CD8-positive, alpha-beta T cell (primary cell): ENCODE measurements at regions of chr1 and their contacts with region 1.

Region 1: DNA sequence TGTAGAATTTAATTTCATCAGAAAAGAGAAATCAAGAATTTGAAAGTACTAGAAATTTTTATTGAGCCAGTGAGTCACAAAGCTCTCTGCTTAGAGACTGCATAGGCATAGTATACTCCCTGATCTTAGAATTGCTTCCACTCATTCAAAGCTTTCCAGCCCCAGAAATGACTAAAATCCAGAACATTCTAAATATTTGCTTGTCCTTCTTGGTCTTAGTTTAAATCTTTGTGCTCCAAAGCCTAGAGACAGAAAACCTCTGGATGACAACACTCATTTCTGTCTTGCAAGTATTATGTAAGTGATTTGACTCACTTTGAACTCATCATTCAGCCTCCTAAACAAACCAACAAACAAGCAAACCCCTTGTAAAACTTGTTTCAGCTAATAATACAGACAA is 74.2 kb downstream of the PTPRC start:
- DNase-seq: no peak
- ATAC-seq: no peak
- H3K4me3 ChIP-seq: no peak overlapping the region
- H3K4me3 Mint-ChIP-seq: no peak overlapping the region
- H3K27ac ChIP-seq: peak overlapping the region in 1 of 2 experiments; percentile 38
- H3K27ac Mint-ChIP-seq: peak overlapping the region; percentile 38
- H3K4me1 ChIP-seq: peaks cover 9% of the 10 kb centered on the region
- H3K4me1 Mint-ChIP-seq: peaks cover 54% of the 10 kb centered on the region
- H3K27me3 ChIP-seq: no peaks in the 10 kb centered on the region
- H3K27me3 Mint-ChIP-seq: no peaks in the 10 kb centered on the region
- CTCF ChIP-seq: no peak

Region 2: GRCh38 chr1:198283222-198283621 is 429.9 kb before region 1 on chr1:
- CTCF ChIA-PET with region 1: no interaction called
- POLR2A ChIA-PET with region 1: no interaction called
- intact Hi-C with region 1: loop called (anchors 10 kb)
- DNase-seq: no peak
- ATAC-seq: no peak
- H3K4me3 ChIP-seq: no peak overlapping the region
- H3K4me3 Mint-ChIP-seq: no peak overlapping the region
- H3K27ac ChIP-seq: no peak overlapping the region
- H3K27ac Mint-ChIP-seq: no peak overlapping the region
- H3K4me1 ChIP-seq: no peaks in the 10 kb centered on the region
- H3K4me1 Mint-ChIP-seq: peaks cover 29% of the 10 kb centered on the region
- H3K27me3 ChIP-seq: no peaks in the 10 kb centered on the region
- H3K27me3 Mint-ChIP-seq: no peaks in the 10 kb centered on the region
- CTCF ChIP-seq: no peak

Region 3: GRCh38 chr1:198726455-198726854 is 13.4 kb after region 1 on chr1:
- CTCF ChIA-PET with region 1: no interaction called
- POLR2A ChIA-PET with region 1: interaction called, 6 read pairs
- intact Hi-C with region 1: loop called in 1 of 2 experiments (anchors 1 kb)
- DNase-seq: no peak
- ATAC-seq: no peak
- H3K4me3 ChIP-seq: no peak overlapping the region
- H3K4me3 Mint-ChIP-seq: no peak overlapping the region
- H3K27ac ChIP-seq: no peak overlapping the region
- H3K27ac Mint-ChIP-seq: peak overlapping the region; percentile 82
- H3K4me1 ChIP-seq: peaks cover 43% of the 10 kb centered on the region
- H3K4me1 Mint-ChIP-seq: peaks cover 75% of the 10 kb centered on the region
- H3K27me3 ChIP-seq: no peaks in the 10 kb centered on the region
- H3K27me3 Mint-ChIP-seq: no peaks in the 10 kb centered on the region
- CTCF ChIP-seq: no peak

Region 4: GRCh38 chr1:198741744-198742143 is 28.7 kb after region 1 on chr1:
- CTCF ChIA-PET with region 1: no interaction called
- POLR2A ChIA-PET with region 1: no interaction called
- intact Hi-C with region 1: loop called (anchors 2 to 5 kb)
- DNase-seq: peak in 1 of 9 experiments; percentile 5
- ATAC-seq: no peak
- H3K4me3 ChIP-seq: no peak overlapping the region
- H3K4me3 Mint-ChIP-seq: no peak overlapping the region
- H3K27ac ChIP-seq: no peak overlapping the region
- H3K27ac Mint-ChIP-seq: peak overlapping the region; percentile 63
- H3K4me1 ChIP-seq: peaks cover 38% of the 10 kb centered on the region
- H3K4me1 Mint-ChIP-seq: peaks cover 47% of the 10 kb centered on the region
- H3K27me3 ChIP-seq: no peaks in the 10 kb centered on the region
- H3K27me3 Mint-ChIP-seq: no peaks in the 10 kb centered on the region
- CTCF ChIP-seq: no peak